WTC11 (cell line): ENCODE measurements at regions of chr9 and their contacts with region 1.

Region 1: GRCh38 chr9:127586537-127586936 is 25.5 kb upstream of the STXBP1 start:
- DNase-seq: peak; percentile 86
- ATAC-seq: peak; percentile 92
- H3K4me3 Mint-ChIP-seq: no peak overlapping the region
- H3K27ac Mint-ChIP-seq: no peak overlapping the region
- H3K4me1 Mint-ChIP-seq: peaks cover 15% of the 10 kb centered on the region
- H3K27me3 Mint-ChIP-seq: no peaks in the 10 kb centered on the region
- CTCF ChIP-seq: peak; percentile 72

Region 2: GRCh38 chr9:127611899-127612790 is 25.6 kb after region 1 on chr9 and contains the start of gene STXBP1:
- CTCF ChIA-PET with region 1: interaction called, 29 read pairs
- POLR2A ChIA-PET with region 1: interaction called, 10 read pairs
- DNase-seq: peak; percentile 90
- ATAC-seq: peak; percentile 74
- H3K4me3 Mint-ChIP-seq: peak within 1 kb of the TSS; percentile 95
- H3K27ac Mint-ChIP-seq: peak within 1 kb of the TSS; percentile 84
- H3K4me1 Mint-ChIP-seq: peaks cover 30% of the 10 kb centered on the region
- H3K27me3 Mint-ChIP-seq: peaks cover 41% of the 10 kb centered on the region
- CTCF ChIP-seq: no peak
- total RNA-seq, gene STXBP1: 37.1 to 45.6 TPM (median 40.3 TPM) in 3 replicates